Heart right ventricle (tissue), 16 donors: ENCODE measurements at regions of chr10 and their contacts with region 1.

Region 1: DNA sequence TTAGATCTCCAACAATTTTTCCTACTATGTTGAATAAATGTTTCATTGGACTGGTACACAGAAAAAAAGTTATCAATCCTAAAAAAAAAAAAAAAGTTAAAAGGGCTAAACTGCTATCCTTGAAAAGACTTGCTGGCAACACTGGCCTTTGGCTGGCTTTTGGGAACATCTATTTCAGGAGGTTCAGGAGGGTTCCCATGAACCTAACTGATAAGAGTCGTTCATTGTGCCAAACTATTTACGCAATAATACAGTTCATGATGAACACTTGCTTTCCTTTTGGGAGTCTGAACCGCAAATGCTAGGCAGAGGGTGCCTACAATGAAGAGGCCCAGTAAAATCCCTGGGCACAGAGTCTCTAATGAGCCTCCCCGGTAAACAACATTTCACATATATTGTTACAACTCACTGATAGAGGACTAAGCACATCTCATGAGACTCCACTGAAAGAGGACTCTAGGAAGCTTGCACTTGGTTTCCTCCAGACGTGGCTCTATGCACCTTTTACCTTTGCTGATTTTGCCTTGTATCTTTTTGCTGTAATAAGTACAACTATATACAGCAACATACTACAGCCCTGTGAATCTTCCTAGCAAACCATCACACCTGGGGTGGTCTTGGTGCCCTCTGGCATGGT is 45.0 kb downstream of the ZFAND4 start:
- DNase-seq: peak in 1 of 2 donors; percentile 55
- ATAC-seq: peak; percentile 84 to 97 (median 94)
- H3K4me3 ChIP-seq: no peak overlapping the region
- H3K27ac ChIP-seq: peak overlapping the region in 9 of 10 donors; percentile 51 to 85 (median 71)
- H3K4me1 ChIP-seq: peaks cover 3 to 36% (median 11%) of the 10 kb centered on the region in 9 donors
- H3K27me3 ChIP-seq: no peaks in the 10 kb centered on the region
- CTCF ChIP-seq: no peak

Region 2: DNA sequence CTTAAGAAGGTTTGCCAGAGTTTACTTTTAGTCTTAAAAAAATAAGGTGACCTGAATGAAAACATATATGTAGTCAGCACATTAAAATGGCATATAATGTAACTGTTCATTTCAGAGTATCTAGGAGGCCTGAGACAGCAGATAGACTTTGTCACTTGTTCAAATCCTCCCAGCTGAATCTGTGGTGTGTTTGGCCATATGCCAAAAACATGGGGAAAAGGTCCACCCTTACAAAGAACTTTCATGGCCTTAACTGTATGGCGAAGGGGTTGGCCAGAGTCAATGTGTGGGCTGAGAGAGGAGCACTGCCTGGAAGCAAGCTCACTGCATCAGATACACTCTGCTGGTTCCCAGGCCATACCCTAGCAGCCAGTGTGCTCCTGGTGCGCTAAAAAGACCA is 139.8 kb before region 1 on chr10:
- intact Hi-C with region 1: no loop called
- DNase-seq: no peak
- ATAC-seq: no peak
- H3K4me3 ChIP-seq: no peak overlapping the region
- H3K27ac ChIP-seq: no peak overlapping the region
- H3K4me1 ChIP-seq: no peaks in the 10 kb centered on the region
- H3K27me3 ChIP-seq: no peaks in the 10 kb centered on the region
- CTCF ChIP-seq: no peak

Region 3: DNA sequence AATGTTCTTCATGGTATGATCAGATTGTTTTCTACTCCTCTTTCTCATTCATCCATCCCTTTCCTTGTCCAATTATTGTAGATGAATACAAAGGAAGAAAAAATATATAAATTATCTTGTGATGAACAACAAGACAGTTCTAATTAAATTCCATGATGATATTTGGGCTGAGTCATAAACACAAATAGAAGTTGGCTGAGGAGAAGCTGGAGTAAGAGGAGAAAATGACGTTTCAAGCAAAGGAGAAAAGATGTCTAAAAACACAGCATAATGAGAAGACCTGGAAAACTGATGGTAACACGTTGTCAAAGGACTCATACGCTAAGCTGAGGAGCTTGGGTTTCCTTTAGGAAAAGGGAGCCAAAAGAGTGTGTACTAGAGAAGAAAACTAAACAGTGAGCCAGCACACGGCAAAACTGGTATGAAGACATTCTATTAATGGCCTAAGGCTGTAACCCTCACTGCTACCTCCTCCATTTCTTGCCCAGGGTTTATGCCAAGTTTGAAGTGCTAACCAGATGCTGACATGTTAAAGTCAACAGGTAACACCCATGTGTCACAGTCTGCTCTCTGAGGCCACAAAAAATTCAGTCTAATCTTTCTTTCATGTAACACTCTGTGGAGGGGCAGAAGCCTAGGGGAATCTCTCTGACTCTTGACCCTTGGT is 19.0 kb after region 1 on chr10:
- intact Hi-C with region 1: loop called in 1 of 10 experiments (anchors 2 kb)
- DNase-seq: no peak
- ATAC-seq: peak in 5 of 8 donors; percentile 49 to 85 (median 57)
- H3K4me3 ChIP-seq: no peak overlapping the region
- H3K27ac ChIP-seq: peak overlapping the region in 6 of 10 donors; percentile 2 to 54 (median 26)
- H3K4me1 ChIP-seq: peaks cover 0 to 12% (median 0%) of the 10 kb centered on the region in 9 donors
- H3K27me3 ChIP-seq: no peaks in the 10 kb centered on the region
- CTCF ChIP-seq: no peak

Region 4: GRCh38 chr10:45660876-45661411 is 33.4 kb after region 1 on chr10:
- intact Hi-C with region 1: loop called in 1 of 10 experiments (anchors 5 kb)
- DNase-seq: no peak
- ATAC-seq: no peak
- H3K4me3 ChIP-seq: no peak overlapping the region
- H3K27ac ChIP-seq: no peak overlapping the region
- H3K4me1 ChIP-seq: peaks cover 0 to 12% (median 3%) of the 10 kb centered on the region in 9 donors
- H3K27me3 ChIP-seq: no peaks in the 10 kb centered on the region
- CTCF ChIP-seq: no peak

Region 5: DNA sequence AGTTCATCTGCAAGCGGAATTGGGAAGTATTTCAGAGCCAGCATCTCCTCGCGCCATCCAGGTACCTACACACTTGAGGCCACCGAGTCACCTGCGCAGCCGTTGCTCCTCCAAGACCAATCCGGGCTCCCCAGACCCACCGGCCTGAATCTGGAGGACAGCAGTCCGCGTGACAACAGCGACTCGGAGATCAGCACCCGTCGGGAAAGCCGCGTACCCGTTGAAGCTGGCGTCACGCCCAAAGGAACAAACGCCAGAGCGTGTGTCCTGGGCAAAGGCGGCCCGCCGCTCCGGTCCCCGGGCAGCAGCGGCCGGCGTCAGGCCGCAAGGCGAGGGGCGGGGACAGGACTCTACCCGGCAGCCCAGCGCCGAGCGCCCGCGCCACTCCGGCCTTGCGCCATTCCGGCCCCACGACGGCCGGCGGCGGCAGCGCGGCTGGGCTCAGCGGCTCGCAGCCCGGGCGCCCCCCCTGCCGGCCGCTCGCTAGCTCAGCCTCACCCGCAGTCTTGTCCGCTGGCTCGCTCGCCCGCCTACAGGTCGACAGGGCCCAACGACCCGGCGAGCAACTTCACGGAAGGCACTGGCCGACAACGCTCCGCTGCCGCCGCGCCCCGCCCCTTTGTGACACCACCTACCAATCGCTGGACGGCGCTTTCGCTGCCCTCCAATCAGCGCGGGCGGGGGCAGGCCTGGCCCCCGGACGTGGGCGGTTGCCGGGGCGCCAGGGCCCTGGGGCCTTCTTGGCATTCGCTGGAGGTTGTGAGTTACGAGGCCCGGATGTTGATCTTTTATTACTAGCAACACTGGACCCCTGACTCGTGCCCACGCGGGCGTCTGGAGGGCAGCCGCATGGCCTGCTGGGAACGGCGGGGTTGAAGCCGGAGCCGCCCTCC is 44.9 kb after region 1 on chr10 and contains the start of gene ZFAND4:
- intact Hi-C with region 1: loop called in 1 of 10 experiments (anchors 2 kb)
- DNase-seq: peak; percentile 98
- ATAC-seq: peak; percentile 98 to 100 (median 99)
- H3K4me3 ChIP-seq: peak within 1 kb of the TSS; percentile 61 to 98 (median 81)
- H3K27ac ChIP-seq: peak within 1 kb of the TSS; percentile 59 to 96 (median 91)
- H3K4me1 ChIP-seq: peaks cover 0 to 24% (median 6%) of the 10 kb centered on the region in 9 donors
- H3K27me3 ChIP-seq: no peaks in the 10 kb centered on the region
- CTCF ChIP-seq: peak; percentile 54 to 92 (median 73)
- total RNA-seq, gene ZFAND4: 9.5 to 12.5 (median 10.5) TPM